ENCODE measurements at regions of chr10 and their contacts with region 1.

Region 1: DNA sequence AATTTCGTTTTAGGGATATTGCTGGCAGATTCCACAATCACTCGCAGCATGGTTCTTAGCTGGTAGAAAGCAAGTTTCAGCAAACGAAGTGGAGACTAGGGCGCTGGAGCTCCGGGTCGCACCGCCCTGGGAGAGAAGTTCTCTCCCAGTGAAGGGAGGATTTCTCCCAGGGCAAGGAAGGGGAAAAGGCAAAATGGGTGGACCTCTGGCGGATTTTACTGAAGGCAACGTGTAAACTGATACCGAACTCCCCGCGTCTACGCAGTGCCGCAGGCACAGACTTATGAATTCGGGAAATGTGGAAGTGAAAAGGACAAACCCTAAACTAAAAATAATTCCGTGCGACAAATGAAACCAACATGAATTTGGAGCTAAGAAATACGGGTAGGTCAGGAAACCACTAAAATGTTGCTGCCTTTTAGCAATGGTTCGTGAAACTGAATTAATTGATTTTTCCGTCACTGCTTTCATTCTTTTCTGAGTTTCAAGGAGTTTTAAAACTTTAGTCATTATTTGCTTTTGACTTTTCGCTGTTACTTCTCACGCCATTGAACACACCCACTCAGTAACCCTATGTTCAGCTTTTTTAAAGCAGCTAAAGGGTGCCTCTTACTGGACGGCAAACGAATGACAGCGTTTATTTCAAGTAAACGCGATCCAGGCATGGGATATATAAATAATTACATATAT is at the start of gene MYOF:
- DNase-seq: peak; percentile 70
- H3K4me3 Mint-ChIP-seq: peak within 1 kb of the TSS; percentile 75
- H3K27ac Mint-ChIP-seq: peak within 1 kb of the TSS; percentile 82
- H3K4me1 Mint-ChIP-seq: peaks cover 13% of the 10 kb centered on the region
- H3K27me3 Mint-ChIP-seq: peaks cover 9% of the 10 kb centered on the region
- total RNA-seq, gene MYOF: 1.4 to 2.7 TPM

Region 2: DNA sequence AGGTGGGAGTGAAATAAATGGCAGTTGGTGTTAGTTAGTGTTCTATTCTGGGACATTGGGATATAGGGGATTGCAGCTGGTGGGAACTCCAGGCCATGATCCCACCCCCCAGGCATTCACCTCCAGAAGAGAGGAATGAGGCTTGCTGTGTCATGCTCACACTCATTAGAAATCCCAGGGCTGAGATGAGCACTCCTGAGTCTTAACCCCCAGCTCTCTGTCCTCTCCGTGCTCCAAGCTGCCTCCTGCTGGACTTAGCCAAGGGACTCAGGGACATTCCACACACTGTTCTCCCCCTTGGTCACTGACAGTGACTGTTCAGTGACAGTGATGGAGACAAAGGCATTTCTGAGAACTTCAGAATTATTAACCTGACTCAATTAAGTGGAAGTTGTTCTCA is 387.1 kb before region 1 on chr10:
- CTCF ChIA-PET with region 1: no interaction called
- POLR2A ChIA-PET with region 1: no interaction called
- DNase-seq: no peak
- H3K4me3 Mint-ChIP-seq: no peak overlapping the region
- H3K27ac Mint-ChIP-seq: no peak overlapping the region
- H3K4me1 Mint-ChIP-seq: no peaks in the 10 kb centered on the region
- H3K27me3 Mint-ChIP-seq: peaks cover 6% of the 10 kb centered on the region

Region 3: GRCh38 chr10:93357680-93358079 is 124.6 kb before region 1 on chr10:
- CTCF ChIA-PET with region 1: interaction called, 10 read pairs
- POLR2A ChIA-PET with region 1: no interaction called
- DNase-seq: peak; percentile 22
- H3K4me3 Mint-ChIP-seq: no peak overlapping the region
- H3K27ac Mint-ChIP-seq: no peak overlapping the region
- H3K4me1 Mint-ChIP-seq: peaks cover 2% of the 10 kb centered on the region
- H3K27me3 Mint-ChIP-seq: no peaks in the 10 kb centered on the region

Region 4: GRCh38 chr10:93376372-93377293 is 105.7 kb before region 1 on chr10:
- CTCF ChIA-PET with region 1: interaction called, 109 read pairs
- POLR2A ChIA-PET with region 1: interaction called, 3 read pairs
- DNase-seq: peak; percentile 67
- H3K4me3 Mint-ChIP-seq: no peak overlapping the region
- H3K27ac Mint-ChIP-seq: peak overlapping the region; percentile 6
- H3K4me1 Mint-ChIP-seq: peaks cover 27% of the 10 kb centered on the region
- H3K27me3 Mint-ChIP-seq: no peaks in the 10 kb centered on the region

Region 5: DNA sequence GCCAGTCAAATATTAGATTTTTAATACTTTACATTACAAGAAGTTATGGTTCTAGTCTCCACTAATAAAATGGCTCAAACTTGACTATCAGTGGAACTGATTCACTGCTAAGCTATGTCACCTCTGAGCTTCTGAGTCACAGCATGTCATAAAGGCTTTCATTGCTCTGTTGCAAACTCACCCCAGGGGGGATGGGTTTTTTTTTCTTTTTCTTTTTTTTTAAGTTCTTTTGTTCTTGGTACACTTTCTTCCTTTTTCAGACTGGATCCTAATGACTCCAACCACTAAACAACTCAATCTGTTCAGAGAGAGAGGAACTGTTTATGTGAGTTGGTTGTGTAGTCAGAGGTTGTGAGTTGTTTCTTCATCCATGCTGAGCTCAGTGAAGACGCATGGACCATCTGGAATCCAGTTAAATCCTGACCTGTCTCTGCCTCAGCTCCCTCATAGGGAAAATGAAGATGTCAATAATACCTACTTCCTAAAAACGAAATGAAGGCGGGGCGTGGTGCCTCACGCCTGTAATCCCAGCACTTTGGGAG is 11.1 kb before region 1 on chr10:
- CTCF ChIA-PET with region 1: interaction called, 32 read pairs
- POLR2A ChIA-PET with region 1: no interaction called
- DNase-seq: no peak
- H3K4me3 Mint-ChIP-seq: no peak overlapping the region
- H3K27ac Mint-ChIP-seq: no peak overlapping the region
- H3K4me1 Mint-ChIP-seq: no peaks in the 10 kb centered on the region
- H3K27me3 Mint-ChIP-seq: no peaks in the 10 kb centered on the region

Region 6: GRCh38 chr10:93512565-93512964 is 30.3 kb after region 1 on chr10:
- CTCF ChIA-PET with region 1: interaction called, 16 read pairs
- POLR2A ChIA-PET with region 1: no interaction called
- DNase-seq: no peak
- H3K4me3 Mint-ChIP-seq: no peak overlapping the region
- H3K27ac Mint-ChIP-seq: no peak overlapping the region
- H3K4me1 Mint-ChIP-seq: peaks cover 5% of the 10 kb centered on the region
- H3K27me3 Mint-ChIP-seq: no peaks in the 10 kb centered on the region